A673 (cell line): ENCODE measurements at regions of chr11 and their contacts with region 1.

Region 1: DNA sequence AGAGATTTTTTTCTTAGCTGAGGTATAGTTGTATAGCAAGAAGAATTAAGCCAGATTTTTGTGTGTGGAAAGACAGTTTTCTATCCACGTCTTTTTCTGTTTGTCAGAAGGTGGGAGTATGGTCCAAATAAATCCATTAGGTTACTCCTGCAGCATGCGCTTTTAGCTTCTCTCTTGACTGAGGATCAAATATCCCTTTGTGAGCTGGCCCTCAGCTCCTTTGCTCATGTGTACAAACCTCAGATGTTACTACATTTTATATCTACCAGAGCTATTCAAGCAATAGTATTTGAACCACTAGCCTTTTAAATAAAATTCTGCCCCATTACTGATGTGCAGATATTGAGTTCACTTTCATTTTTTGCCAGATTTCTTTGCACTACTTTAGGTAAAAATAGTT is 8.8 kb upstream of the SIDT2 start:
- DNase-seq: no peak
- H3K4me3 ChIP-seq: no peak overlapping the region
- H3K27ac ChIP-seq: no peak overlapping the region
- H3K4me1 ChIP-seq: no peaks in the 10 kb centered on the region
- H3K27me3 ChIP-seq: no peaks in the 10 kb centered on the region
- CTCF ChIP-seq: no peak

Region 2: GRCh38 chr11:117075186-117075585 is 94.5 kb before region 1 on chr11:
- CTCF ChIA-PET with region 1: no interaction called
- POLR2A ChIA-PET with region 1: interaction called, 18 read pairs
- intact Hi-C with region 1: no loop called
- DNase-seq: peak; percentile 79
- H3K4me3 ChIP-seq: no peak overlapping the region
- H3K27ac ChIP-seq: peak overlapping the region; percentile 2
- H3K4me1 ChIP-seq: peaks cover 72% of the 10 kb centered on the region
- H3K27me3 ChIP-seq: no peaks in the 10 kb centered on the region
- CTCF ChIP-seq: no peak

Region 3: GRCh38 chr11:117232092-117232878 is 62.5 kb after region 1 on chr11 and contains the start of gene RNF214:
- CTCF ChIA-PET with region 1: no interaction called
- POLR2A ChIA-PET with region 1: no interaction called
- intact Hi-C with region 1: no loop called
- DNase-seq: peak; percentile 90
- H3K4me3 ChIP-seq: peak within 1 kb of the TSS; percentile 99
- H3K27ac ChIP-seq: peak within 1 kb of the TSS; percentile 88
- H3K4me1 ChIP-seq: peaks cover 14% of the 10 kb centered on the region
- H3K27me3 ChIP-seq: no peaks in the 10 kb centered on the region
- CTCF ChIP-seq: peak; percentile 81
- total RNA-seq, gene RNF214: 37.8 and 50.3 TPM in 2 replicates

Region 4: GRCh38 chr11:117375960-117376359 is 206.2 kb after region 1 on chr11:
- CTCF ChIA-PET with region 1: no interaction called
- POLR2A ChIA-PET with region 1: no interaction called
- intact Hi-C with region 1: no loop called
- DNase-seq: no peak
- H3K4me3 ChIP-seq: no peak overlapping the region
- H3K27ac ChIP-seq: no peak overlapping the region
- H3K4me1 ChIP-seq: no peaks in the 10 kb centered on the region
- H3K27me3 ChIP-seq: no peaks in the 10 kb centered on the region
- CTCF ChIP-seq: no peak

Region 5: GRCh38 chr11:117468888-117469287 is 299.2 kb after region 1 on chr11:
- CTCF ChIA-PET with region 1: no interaction called
- POLR2A ChIA-PET with region 1: no interaction called
- intact Hi-C with region 1: no loop called
- DNase-seq: no peak
- H3K4me3 ChIP-seq: no peak overlapping the region
- H3K27ac ChIP-seq: no peak overlapping the region
- H3K4me1 ChIP-seq: no peaks in the 10 kb centered on the region
- H3K27me3 ChIP-seq: no peaks in the 10 kb centered on the region
- CTCF ChIP-seq: no peak

Region 6: DNA sequence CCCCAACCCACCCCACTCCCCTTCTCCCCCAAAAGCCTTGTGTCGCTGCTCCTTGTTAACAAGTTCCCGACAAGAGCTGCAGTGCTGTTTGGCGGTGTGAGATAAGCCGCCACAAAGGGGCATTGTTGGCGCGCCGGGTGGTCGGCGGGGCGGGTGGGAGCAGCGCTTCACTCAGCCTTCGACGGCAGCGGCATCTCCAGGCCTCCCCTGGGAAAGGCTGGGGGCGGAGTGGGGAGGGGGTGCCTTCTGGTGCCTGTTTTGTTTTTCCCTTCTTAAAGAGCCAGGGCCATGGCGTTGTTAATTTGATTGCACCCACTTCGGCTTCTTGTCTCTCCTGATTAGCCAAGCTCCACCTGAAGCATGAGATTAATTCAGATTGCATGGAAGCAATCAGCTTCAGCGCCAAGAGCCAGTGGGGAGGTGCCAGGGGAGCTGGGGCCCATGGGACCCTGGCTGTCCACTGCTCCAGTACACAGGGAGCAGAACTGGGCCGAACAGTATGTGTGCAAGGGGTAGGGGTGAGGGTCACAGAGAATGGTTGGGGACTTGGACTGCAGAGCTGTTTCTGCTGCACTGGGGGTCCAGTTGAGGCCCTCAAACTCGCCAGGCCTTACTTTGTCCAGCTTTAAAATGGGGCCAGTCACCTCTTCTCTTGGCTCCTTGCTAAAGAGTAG is 323.0 kb after region 1 on chr11:
- CTCF ChIA-PET with region 1: no interaction called
- POLR2A ChIA-PET with region 1: no interaction called
- intact Hi-C with region 1: no loop called
- DNase-seq: peak; percentile 19
- H3K4me3 ChIP-seq: no peak overlapping the region
- H3K27ac ChIP-seq: no peak overlapping the region
- H3K4me1 ChIP-seq: no peaks in the 10 kb centered on the region
- H3K27me3 ChIP-seq: peaks cover 9% of the 10 kb centered on the region
- CTCF ChIP-seq: no peak